Activated CD8-positive, alpha-beta T cell treated with anti-CD3 and anti-CD28 coated beads for 36 hours (primary cell): ENCODE measurements at regions of chr7 and their contacts with region 1.

Region 1: GRCh38 chr7:74026903-74027551 is 946 bp upstream of the ELN start:
- DNase-seq: peak; percentile 76
- ATAC-seq: peak; percentile 86
- H3K4me3 Mint-ChIP-seq: no peak overlapping the region
- H3K27ac Mint-ChIP-seq: no peak overlapping the region
- H3K4me1 Mint-ChIP-seq: peaks cover 2% of the 10 kb centered on the region
- H3K27me3 Mint-ChIP-seq: peaks cover 42% of the 10 kb centered on the region
- CTCF ChIP-seq: peak; percentile 95

Region 2: DNA sequence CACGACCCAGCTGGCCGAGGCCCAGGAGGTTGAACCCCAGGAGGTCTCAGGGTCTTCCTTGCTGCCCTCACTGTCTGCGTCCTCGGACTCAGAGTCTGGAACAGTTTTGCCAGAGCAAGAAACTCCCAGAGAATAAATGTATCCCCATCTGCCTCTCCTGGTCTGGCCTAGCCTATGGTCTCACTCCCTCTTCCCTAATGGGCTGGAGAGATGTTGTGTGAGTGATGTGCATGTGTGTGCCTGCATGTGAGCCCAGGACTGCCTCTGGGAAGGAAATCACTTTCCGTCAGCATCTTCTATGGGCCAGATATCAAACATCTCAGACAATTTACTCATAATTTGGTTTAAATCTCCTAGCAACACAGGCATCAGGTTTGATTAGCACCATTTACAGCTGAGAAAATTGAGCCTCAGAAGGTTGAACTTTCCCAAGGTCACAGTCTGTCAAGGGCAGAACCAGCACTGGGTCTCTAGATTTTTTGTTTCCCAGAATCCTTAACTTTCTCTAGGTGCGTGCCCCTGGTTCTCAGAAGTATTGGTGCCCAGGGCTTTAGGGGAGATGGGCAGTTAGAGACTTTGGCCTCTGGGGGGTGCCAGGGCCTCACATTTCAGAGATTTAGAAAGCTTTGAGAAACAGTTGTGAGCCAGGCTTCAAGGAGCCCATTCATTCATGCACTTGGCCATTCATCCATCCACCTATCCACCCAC is 161.1 kb before region 1 on chr7:
- CTCF ChIA-PET with region 1: interaction called, 11 read pairs
- POLR2A ChIA-PET with region 1: no interaction called
- intact Hi-C with region 1: loop called (anchors 10 kb)
- DNase-seq: peak; percentile 32
- ATAC-seq: peak; percentile 56
- H3K4me3 Mint-ChIP-seq: no peak overlapping the region
- H3K27ac Mint-ChIP-seq: no peak overlapping the region
- H3K4me1 Mint-ChIP-seq: no peaks in the 10 kb centered on the region
- H3K27me3 Mint-ChIP-seq: no peaks in the 10 kb centered on the region
- CTCF ChIP-seq: peak; percentile 39

Region 3: GRCh38 chr7:73963252-73963822 is 63.7 kb before region 1 on chr7:
- CTCF ChIA-PET with region 1: interaction called, 16 read pairs
- POLR2A ChIA-PET with region 1: no interaction called
- intact Hi-C with region 1: no loop called
- DNase-seq: no peak
- ATAC-seq: no peak
- H3K4me3 Mint-ChIP-seq: no peak overlapping the region
- H3K27ac Mint-ChIP-seq: no peak overlapping the region
- H3K4me1 Mint-ChIP-seq: no peaks in the 10 kb centered on the region
- H3K27me3 Mint-ChIP-seq: no peaks in the 10 kb centered on the region
- CTCF ChIP-seq: no peak

Region 4: GRCh38 chr7:74012842-74013249 is 14.2 kb before region 1 on chr7:
- CTCF ChIA-PET with region 1: interaction called, 27 read pairs
- POLR2A ChIA-PET with region 1: no interaction called
- intact Hi-C with region 1: no loop called
- DNase-seq: peak; percentile 10
- ATAC-seq: no peak
- H3K4me3 Mint-ChIP-seq: no peak overlapping the region
- H3K27ac Mint-ChIP-seq: no peak overlapping the region
- H3K4me1 Mint-ChIP-seq: no peaks in the 10 kb centered on the region
- H3K27me3 Mint-ChIP-seq: peaks cover 3% of the 10 kb centered on the region
- CTCF ChIP-seq: no peak

Region 5: DNA sequence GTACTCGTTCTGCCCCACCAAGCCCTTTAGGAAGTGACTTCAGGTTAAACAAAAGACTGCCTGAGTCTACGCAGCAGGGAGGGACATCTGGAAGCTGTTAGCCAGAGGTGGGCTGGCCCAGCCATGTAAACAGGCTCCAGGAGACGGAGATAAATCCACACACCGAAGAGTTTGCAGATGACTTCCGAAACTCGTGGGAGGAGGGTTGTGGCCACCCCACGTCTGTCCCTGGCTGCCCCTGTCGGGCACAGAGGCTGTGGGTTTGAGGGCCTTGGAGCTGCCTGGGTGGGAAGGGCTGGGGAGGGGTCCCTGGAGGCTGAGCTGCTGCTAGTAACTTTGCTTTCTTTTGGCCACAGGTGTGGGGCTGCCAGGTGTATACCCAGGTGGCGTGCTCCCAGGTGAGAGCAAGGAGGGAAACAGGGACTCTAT is 16.5 kb after region 1 on chr7:
- CTCF ChIA-PET with region 1: interaction called, 38 read pairs
- POLR2A ChIA-PET with region 1: no interaction called
- intact Hi-C with region 1: no loop called
- DNase-seq: no peak
- ATAC-seq: no peak
- H3K4me3 Mint-ChIP-seq: no peak overlapping the region
- H3K27ac Mint-ChIP-seq: no peak overlapping the region
- H3K4me1 Mint-ChIP-seq: no peaks in the 10 kb centered on the region
- H3K27me3 Mint-ChIP-seq: no peaks in the 10 kb centered on the region
- CTCF ChIP-seq: no peak

Region 6: GRCh38 chr7:74718336-74718735 is 691.3 kb after region 1 on chr7:
- CTCF ChIA-PET with region 1: no interaction called
- POLR2A ChIA-PET with region 1: no interaction called
- intact Hi-C with region 1: no loop called
- DNase-seq: no peak
- ATAC-seq: no peak
- H3K4me3 Mint-ChIP-seq: no peak overlapping the region
- H3K27ac Mint-ChIP-seq: no peak overlapping the region
- H3K4me1 Mint-ChIP-seq: peaks cover 10% of the 10 kb centered on the region
- H3K27me3 Mint-ChIP-seq: no peaks in the 10 kb centered on the region
- CTCF ChIP-seq: no peak